Activated CD4-positive, alpha-beta memory T cell treated with anti-CD3 and anti-CD28 coated beads, Interleukin-2, amount 10 ng/mL, durations not matched to agents 7 days and 5 days (primary cell): ENCODE measurements at regions of chr17 and their contacts with region 1.

Region 1: GRCh38 chr17:78140169-78140976 is 5.8 kb upstream of the C17orf99 start:
- DNase-seq: peak; percentile 99
- H3K4me3 Mint-ChIP-seq: peak overlapping the region; percentile 15
- H3K27ac Mint-ChIP-seq: peak overlapping the region; percentile 82
- H3K4me1 Mint-ChIP-seq: peaks cover 66% of the 10 kb centered on the region
- H3K27me3 Mint-ChIP-seq: no peaks in the 10 kb centered on the region

Region 2: DNA sequence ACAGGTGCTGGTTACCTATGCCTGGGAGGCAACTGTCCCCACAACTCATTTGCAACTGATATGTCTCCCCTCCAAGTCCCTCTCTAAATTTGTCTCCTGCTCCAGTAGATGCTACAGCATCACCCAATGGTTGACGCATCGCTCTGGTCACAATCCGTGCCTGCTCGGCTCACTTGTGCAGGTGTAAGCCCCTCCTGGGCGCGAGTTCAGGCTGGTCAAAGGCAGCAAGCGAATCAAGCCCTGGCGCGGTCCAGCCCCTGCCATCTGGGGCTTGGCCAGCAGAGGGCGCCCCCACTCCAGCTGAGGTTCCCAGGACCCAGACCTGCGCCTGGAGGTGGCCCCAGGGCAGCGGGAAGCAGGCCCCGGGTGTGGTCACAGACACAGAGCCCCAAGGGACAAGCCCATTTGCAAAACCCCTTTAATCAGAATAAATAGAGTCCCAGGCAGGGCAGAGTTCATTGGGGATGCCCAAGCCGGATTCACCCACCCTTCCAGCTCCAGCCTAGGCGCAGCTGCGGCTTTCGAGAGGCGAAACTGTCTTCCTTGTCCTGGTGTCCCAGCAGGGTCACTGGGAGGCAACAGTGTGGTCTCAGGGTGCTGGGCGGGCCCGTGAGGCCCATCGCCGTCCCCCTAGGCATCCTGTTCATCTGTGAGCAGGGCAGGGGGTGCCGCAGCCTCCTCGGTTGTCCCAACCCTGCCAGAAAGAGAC is 27.7 kb before region 1 on chr17:
- CTCF ChIA-PET with region 1: interaction called, 11 read pairs
- POLR2A ChIA-PET with region 1: interaction called, 332 read pairs
- DNase-seq: peak; percentile 81
- H3K4me3 Mint-ChIP-seq: no peak overlapping the region
- H3K27ac Mint-ChIP-seq: peak overlapping the region; percentile 76
- H3K4me1 Mint-ChIP-seq: peaks cover 37% of the 10 kb centered on the region
- H3K27me3 Mint-ChIP-seq: no peaks in the 10 kb centered on the region

Region 3: DNA sequence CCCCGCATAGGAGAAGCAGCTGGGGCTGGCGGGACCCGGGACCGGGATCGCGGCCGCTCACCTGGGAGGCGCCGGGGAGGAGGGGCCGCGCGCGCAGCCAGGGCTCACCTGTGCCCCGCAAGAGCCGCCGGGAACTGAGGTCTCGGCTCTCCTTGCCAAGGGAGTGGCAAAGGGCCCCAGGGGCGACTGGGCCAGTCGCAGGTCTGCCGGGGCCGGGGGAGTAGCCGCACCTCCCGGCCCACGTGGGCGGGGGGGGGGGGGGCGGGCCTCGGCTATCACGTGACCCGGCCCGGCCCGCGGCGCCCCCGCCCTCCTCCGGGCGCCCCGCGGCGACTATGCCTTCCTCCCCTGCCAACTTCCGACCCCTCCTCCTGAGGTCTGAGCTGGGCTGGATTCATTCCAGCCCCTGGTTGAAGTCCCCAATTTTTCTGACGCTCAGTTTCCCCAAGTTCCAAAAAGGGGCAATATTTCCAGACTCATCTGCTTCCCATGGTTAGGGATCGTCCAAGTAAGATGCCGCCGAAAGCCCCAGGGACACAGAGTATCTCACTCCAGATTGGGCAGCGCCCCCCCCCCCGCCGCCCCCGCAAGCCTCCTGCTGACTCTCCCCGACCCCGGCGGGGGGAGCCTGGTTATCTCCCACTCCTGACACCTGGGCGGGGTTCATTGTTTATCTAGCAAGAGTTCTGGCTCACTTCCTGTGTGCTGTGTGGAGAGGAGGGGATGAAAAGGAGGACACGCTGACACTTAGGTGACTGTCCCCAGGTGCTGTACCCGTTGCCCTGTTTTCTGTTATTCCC is 11.6 kb before region 1 on chr17 and contains the start of gene TMC6:
- CTCF ChIA-PET with region 1: interaction called, 106 read pairs
- POLR2A ChIA-PET with region 1: interaction called, 332 read pairs
- DNase-seq: peak; percentile 79
- H3K4me3 Mint-ChIP-seq: peak within 1 kb of the TSS; percentile 88
- H3K27ac Mint-ChIP-seq: peak within 1 kb of the TSS; percentile 100
- H3K4me1 Mint-ChIP-seq: peaks cover 49% of the 10 kb centered on the region
- H3K27me3 Mint-ChIP-seq: no peaks in the 10 kb centered on the region
- total RNA-seq, gene TMC6: 460 to 463 TPM

Region 4: GRCh38 chr17:78154903-78155811 is 14.8 kb after region 1 on chr17:
- CTCF ChIA-PET with region 1: no interaction called
- POLR2A ChIA-PET with region 1: interaction called, 12 read pairs
- DNase-seq: peak; percentile 40
- H3K4me3 Mint-ChIP-seq: no peak overlapping the region
- H3K27ac Mint-ChIP-seq: peak overlapping the region; percentile 9
- H3K4me1 Mint-ChIP-seq: peaks cover 14% of the 10 kb centered on the region
- H3K27me3 Mint-ChIP-seq: no peaks in the 10 kb centered on the region

Region 5: DNA sequence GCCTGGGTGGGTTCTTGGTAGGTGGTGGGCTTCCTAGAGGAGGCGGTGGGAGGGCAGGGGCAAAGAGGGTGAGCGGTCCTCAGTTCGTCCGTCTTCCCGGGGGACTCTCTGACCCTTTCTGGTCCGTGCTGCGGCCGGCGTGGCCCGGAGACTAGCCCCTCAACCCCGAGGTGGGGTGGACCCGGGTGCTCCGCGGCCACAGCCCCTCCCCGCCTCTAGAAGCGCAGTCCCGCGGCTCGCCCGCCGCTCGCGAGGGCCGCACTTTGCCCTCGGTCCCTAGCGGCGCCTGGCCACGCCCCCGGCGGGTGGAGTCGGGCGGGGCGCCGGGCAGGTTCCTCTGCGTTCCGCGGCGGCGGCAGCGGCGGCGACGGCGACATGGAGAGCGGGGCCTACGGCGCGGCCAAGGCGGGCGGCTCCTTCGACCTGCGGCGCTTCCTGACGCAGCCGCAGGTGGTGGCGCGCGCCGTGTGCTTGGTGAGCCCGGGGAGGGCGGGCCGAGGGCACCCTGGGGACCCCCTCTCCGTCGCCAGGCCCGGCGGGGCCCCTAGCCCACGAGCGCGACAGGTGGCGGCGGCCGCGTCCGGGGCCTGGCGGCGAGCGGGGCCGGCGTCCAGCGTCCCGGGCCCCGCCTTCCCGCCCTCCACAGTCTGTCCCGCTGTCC is 28.0 kb after region 1 on chr17 and contains the start of gene SYNGR2:
- CTCF ChIA-PET with region 1: interaction called, 5 read pairs
- POLR2A ChIA-PET with region 1: interaction called, 15 read pairs
- DNase-seq: peak; percentile 89
- H3K4me3 Mint-ChIP-seq: peak within 1 kb of the TSS; percentile 67
- H3K27ac Mint-ChIP-seq: peak within 1 kb of the TSS; percentile 66
- H3K4me1 Mint-ChIP-seq: peaks cover 38% of the 10 kb centered on the region
- H3K27me3 Mint-ChIP-seq: no peaks in the 10 kb centered on the region
- total RNA-seq, gene SYNGR2: 63.6 to 64.0 TPM